Psoas muscle (tissue), 8 donors: ENCODE measurements at regions of chr1 and their contacts with region 1.

Region 1: DNA sequence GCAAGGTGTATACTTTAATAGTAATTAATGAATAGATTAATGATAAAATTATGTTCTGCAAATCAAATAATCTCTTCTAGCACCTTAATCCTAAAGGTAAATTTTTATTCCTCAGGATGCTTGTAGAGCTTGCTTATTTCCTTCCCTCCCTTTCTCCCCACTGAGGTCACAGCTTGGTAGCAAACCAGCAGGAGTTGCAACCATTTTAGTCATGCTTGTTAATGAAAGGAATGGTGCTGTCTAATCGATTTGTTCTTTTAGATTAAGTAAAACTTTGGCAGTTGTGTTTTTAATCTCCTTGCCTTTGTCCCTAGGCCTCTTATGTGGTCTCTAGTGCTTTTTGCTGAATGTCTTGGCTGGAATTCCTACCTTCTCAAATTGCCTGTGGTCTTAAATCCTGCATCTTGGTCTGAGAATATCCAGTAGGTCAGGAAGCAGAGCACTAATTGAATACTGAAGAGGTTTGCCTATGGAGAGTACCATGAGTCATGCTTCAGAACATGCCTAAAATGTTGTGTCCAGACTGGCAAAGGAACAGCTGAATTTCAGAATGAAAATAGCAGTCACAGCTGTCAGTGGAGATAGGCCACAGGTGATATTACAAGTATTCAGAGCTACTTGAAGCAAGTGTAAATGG is 36.3 kb upstream of the RWDD3 start:
- DNase-seq: no peak
- ATAC-seq: peak; percentile 86 to 93 (median 92)
- H3K4me3 ChIP-seq: peak overlapping the region; percentile 0
- H3K27ac ChIP-seq: peak overlapping the region; percentile 62
- H3K4me1 ChIP-seq: peaks cover 41% of the 10 kb centered on the region
- H3K27me3 ChIP-seq: no peaks in the 10 kb centered on the region
- CTCF ChIP-seq: no peak

Region 2: GRCh38 chr1:95154096-95154495 is 43.6 kb before region 1 on chr1:
- intact Hi-C with region 1: loop called in 1 of 2 experiments (anchors 5 kb)
- DNase-seq: no peak
- ATAC-seq: no peak
- H3K4me3 ChIP-seq: no peak overlapping the region
- H3K27ac ChIP-seq: no peak overlapping the region
- H3K4me1 ChIP-seq: no peaks in the 10 kb centered on the region
- H3K27me3 ChIP-seq: no peaks in the 10 kb centered on the region
- CTCF ChIP-seq: no peak